ENCODE measurements at regions of chr13 and their contacts with region 1.

Region 1: DNA sequence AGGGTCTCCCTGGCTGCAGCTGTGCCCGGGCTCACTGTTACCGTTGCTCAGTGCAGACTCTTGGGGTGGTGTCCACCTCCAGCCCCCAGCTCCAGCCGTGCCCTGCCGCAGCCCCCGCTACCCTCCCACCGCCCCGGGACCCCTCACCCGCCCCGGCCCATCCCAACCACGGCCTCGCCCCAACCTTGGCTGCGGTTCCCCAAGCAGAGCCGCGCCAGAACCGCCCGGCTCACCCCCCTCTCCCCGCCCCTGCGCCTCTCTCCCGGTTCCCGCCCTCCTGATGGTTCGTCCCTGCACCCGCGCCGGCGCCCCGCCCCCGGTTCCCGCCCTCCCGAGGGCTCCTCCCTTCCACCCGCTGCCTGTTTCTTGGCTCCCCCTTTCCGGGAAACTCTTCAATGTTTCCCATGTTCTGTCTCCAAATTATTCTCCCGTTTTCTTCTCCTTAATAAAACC is 40.3 kb downstream of the ANKRD10 start:
- DNase-seq: no peak
- H3K4me3 ChIP-seq: peak overlapping the region; percentile 58
- H3K27ac ChIP-seq: no peak overlapping the region
- H3K27me3 ChIP-seq: no peaks in the 10 kb centered on the region
- CTCF ChIP-seq: no peak

Region 2: DNA sequence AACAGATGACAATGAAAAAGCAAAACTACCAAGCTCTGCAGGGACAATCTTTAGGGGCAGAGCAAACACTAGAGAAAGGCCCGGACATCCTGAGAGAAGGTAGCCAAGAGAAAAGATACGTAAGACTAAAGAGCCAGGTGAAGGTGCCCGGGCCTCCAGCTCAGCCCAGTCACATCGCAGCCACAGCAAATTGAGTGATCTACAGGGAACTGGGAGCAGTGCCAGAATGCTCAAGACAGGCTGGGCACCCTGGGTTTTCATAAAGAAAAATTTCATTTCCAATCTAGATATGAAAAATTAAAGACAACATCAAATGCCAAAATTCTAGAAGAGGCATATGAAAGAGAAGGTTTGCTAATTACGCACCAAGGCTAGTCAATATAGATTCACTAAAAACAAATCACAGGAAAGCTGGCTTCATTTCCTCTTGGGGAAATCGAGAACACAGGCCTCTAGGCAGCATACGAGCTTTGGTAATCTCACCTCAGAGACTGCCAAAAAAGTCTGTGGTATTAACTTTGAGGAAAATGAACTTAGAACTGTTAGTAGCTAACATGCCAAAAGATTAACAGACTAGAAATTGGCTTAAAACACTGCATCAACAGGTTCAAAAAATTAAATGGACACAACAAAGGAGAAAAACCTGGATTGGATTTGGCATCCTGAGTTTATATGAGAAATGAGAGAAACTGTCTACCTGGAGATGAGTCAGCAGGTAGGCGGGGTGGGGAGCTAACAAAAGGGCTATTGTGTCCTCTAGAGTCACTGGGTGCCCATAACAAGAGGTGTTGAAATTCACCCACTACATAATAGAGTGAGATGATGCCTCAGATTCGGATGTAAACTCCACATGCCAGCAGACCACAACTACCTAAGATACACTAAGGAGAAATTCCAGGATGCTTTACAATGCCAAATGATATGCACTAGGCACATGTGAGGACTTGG is 33.7 kb after region 1 on chr13:
- CTCF ChIA-PET with region 1: interaction called, 11 read pairs
- POLR2A ChIA-PET with region 1: no interaction called
- DNase-seq: no peak
- H3K4me3 ChIP-seq: no peak overlapping the region
- H3K27ac ChIP-seq: no peak overlapping the region
- H3K27me3 ChIP-seq: no peaks in the 10 kb centered on the region
- CTCF ChIP-seq: no peak

Region 3: DNA sequence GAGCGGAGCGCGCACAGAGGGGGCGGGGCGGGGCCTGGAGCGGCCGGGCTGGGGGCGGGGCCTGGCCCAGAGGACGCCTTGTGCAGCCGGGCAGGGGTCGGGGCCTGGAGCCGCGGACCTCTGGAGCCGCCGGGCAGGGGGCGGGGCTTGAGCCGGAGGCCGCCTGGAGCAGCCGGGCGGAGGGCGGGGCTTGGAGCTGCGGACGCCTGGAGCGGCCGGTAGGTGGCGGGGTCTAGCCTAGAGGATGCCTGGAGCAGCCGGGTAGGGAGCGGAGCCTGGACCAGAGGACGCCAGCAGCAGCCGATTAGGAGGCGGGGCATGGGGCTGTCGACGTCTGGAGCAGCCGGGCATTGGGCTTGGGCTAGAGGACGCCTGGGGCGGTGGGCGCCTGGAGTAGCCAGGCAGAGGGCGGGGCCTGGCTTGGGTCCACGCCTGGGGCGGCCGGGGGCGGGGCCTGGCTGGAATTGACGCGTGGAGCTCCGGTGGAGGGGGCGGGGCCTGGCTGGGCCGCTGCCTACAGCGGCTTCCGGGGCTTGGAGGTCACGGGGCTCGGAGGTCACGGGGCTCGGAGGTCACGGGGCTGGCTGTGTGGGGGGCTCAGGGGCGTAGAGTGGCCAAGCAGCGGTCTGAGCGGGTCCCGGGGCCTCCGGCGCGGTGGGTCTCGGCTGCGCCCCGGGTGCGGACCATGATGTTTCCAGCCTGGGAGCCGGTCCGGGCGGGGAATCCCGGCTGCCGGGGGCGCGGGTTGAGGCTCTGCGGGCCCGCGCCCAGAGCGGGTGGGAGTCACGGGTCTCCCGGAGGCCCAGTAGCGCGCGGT is 40.7 kb after region 1 on chr13 and contains the start of gene ANKRD10:
- CTCF ChIA-PET with region 1: interaction called, 3 read pairs
- POLR2A ChIA-PET with region 1: interaction called, 11 read pairs
- DNase-seq: peak; percentile 98
- H3K4me3 ChIP-seq: peak within 1 kb of the TSS; percentile 99
- H3K27ac ChIP-seq: peak within 1 kb of the TSS; percentile 97
- H3K27me3 ChIP-seq: no peaks in the 10 kb centered on the region
- CTCF ChIP-seq: peak; percentile 76
- polyA plus RNA-seq, gene ANKRD10: 85.8 and 105 TPM in 2 replicates

Measured in AG04450 (cell line).